SK-N-SH (cell line): ENCODE measurements at regions of chr7 and their contacts with region 1.

Region 1: GRCh38 chr7:108146070-108146837 is 16.1 kb upstream of the LAMB4 start:
- DNase-seq: peak; percentile 69
- H3K4me3 ChIP-seq: no peak overlapping the region
- H3K27ac ChIP-seq: peak overlapping the region in 1 of 2 experiments; percentile 40; a peak in 1 of 4 replicates
- H3K4me1 ChIP-seq: peaks cover 0 to 6% of the 10 kb centered on the region in 2 experiments; a peak in 1 of 4 replicates
- H3K27me3 ChIP-seq: no peaks in the 10 kb centered on the region
- CTCF ChIP-seq: peak; percentile 100
- EP300 ChIP-seq: peak in 1 of 2 experiments; percentile 50; a peak in 1 of 4 replicates
- RAD21 ChIP-seq: peak; percentile 100

Region 2: DNA sequence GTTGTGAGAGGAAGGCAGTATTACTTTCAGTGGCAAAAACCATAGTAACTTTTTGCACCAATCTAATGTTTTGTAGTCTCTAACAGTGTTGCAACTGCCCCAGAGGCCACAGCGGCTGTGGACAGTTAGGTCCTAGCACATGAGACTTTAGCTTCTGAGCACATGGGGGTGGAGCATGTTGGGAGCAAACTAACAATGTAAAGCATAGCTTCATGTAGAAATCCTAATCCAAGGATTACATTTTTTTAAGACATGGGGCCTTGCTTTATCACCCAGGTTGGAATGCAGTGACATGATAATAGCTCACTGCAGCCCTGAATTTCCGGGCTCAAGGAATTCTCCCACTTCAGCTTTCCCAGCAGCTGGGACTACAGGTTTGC is 192.3 kb before region 1 on chr7:
- CTCF ChIA-PET with region 1: interaction called, 28 read pairs
- POLR2A ChIA-PET with region 1: no interaction called
- DNase-seq: no peak
- H3K4me3 ChIP-seq: no peak overlapping the region
- H3K27ac ChIP-seq: peak overlapping the region; percentile 90 to 93
- H3K4me1 ChIP-seq: peaks cover 33 to 42% of the 10 kb centered on the region in 2 experiments
- H3K27me3 ChIP-seq: no peaks in the 10 kb centered on the region
- CTCF ChIP-seq: no peak
- EP300 ChIP-seq: no peak
- RAD21 ChIP-seq: no peak

Region 3: DNA sequence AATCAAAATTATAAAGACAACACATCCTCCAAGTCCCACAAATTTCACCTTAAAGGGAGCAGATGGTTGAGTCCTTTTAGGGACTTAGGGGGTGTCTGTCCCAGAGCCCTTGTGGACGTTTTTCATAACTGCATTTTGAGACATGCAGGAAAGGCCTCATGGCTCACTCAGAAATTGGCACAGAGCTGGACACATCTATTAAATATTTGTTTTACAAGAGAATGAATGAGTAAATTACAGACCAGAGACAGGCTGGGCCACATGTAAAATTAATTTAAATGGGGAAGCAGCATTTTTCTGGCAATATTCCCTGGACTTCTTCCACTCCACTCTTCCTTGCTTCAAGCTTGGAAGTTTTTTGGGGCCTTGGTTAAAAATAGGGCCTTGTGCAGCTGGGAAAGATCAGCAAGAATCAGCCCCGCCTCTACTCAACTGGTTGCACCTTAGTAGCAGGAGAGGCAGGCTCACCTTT is 163.3 kb before region 1 on chr7:
- CTCF ChIA-PET with region 1: interaction called, 16 read pairs
- POLR2A ChIA-PET with region 1: no interaction called
- DNase-seq: no peak
- H3K4me3 ChIP-seq: no peak overlapping the region
- H3K27ac ChIP-seq: peak overlapping the region; percentile 11 to 64; a peak in 3 of 4 replicates
- H3K4me1 ChIP-seq: peaks cover 0 to 11% of the 10 kb centered on the region in 2 experiments; a peak in 3 of 4 replicates
- H3K27me3 ChIP-seq: no peaks in the 10 kb centered on the region
- CTCF ChIP-seq: peak; percentile 53
- EP300 ChIP-seq: peak in 1 of 2 experiments; percentile 43; a peak in 1 of 4 replicates
- RAD21 ChIP-seq: no peak; the same call in 1 of the 2 replicates

Region 4: GRCh38 chr7:108094933-108095710 is 51.1 kb before region 1 on chr7:
- CTCF ChIA-PET with region 1: interaction called, 12 read pairs
- POLR2A ChIA-PET with region 1: no interaction called
- DNase-seq: peak; percentile 31
- H3K4me3 ChIP-seq: no peak overlapping the region; a peak in 1 of 4 replicates
- H3K27ac ChIP-seq: peak overlapping the region; percentile 81 to 85
- H3K4me1 ChIP-seq: peaks cover 13 to 25% of the 10 kb centered on the region in 2 experiments
- H3K27me3 ChIP-seq: no peaks in the 10 kb centered on the region
- CTCF ChIP-seq: no peak
- EP300 ChIP-seq: peak in 1 of 2 experiments; percentile 66; a peak in 1 of 4 replicates
- RAD21 ChIP-seq: no peak

Region 5: DNA sequence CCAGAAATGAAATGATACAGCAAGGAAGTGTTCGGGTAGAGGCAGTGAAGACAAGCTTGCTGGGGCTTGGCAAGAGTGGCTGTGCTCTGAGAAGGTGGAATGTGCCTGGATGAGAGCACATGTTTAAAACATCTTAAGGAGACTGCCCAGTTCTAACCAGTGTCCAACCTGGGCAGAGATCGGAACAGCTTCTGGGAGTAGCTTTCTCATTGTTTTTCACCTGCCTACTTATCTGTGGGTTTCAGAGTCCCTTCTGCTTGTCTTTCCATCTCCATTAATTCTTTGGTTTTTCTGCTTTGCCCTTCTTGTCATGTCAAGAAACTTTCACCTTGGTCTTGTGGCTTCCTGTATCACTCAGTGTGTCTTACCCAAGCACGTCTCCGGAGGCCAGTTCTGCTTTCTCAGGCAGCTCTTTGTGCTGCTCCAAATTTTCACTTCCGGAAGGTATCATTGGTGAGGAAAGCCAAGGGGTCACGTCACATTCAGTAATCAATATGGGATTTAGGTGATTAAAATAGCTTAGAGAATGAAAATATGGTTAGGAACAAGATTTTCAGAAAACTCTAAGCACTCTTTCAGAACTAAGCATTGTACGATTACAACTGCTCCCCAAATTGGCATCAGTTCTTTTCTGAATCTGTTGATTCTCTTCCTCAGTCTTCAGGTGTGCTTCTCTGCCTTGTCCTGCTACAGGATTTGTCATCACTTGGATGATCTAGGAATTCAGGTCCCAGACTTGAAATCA is 10.6 kb before region 1 on chr7:
- CTCF ChIA-PET with region 1: interaction called, 90 read pairs
- POLR2A ChIA-PET with region 1: no interaction called
- DNase-seq: no peak
- H3K4me3 ChIP-seq: no peak overlapping the region
- H3K27ac ChIP-seq: no peak overlapping the region
- H3K4me1 ChIP-seq: peaks cover 5 to 14% of the 10 kb centered on the region in 2 experiments; a peak in 2 of 4 replicates
- H3K27me3 ChIP-seq: no peaks in the 10 kb centered on the region
- CTCF ChIP-seq: no peak
- EP300 ChIP-seq: no peak
- RAD21 ChIP-seq: no peak